AG04450 (cell line): ENCODE measurements at regions of chr11 and their contacts with region 1.

Region 1: GRCh38 chr11:26134481-26135355 is 197.2 kb upstream of the ANO3 start:
- DNase-seq: no peak
- H3K4me3 ChIP-seq: no peak overlapping the region
- H3K27ac ChIP-seq: no peak overlapping the region
- H3K27me3 ChIP-seq: no peaks in the 10 kb centered on the region
- CTCF ChIP-seq: peak; percentile 45

Region 2: GRCh38 chr11:25992294-25992693 is 142.4 kb before region 1 on chr11:
- CTCF ChIA-PET with region 1: interaction called, 10 read pairs
- POLR2A ChIA-PET with region 1: no interaction called
- DNase-seq: no peak
- H3K4me3 ChIP-seq: no peak overlapping the region
- H3K27ac ChIP-seq: no peak overlapping the region
- H3K27me3 ChIP-seq: no peaks in the 10 kb centered on the region
- CTCF ChIP-seq: no peak

Region 3: GRCh38 chr11:26112190-26112715 is 22.5 kb before region 1 on chr11:
- CTCF ChIA-PET with region 1: no interaction called
- POLR2A ChIA-PET with region 1: no interaction called
- DNase-seq: no peak
- H3K4me3 ChIP-seq: no peak overlapping the region
- H3K27ac ChIP-seq: no peak overlapping the region
- H3K27me3 ChIP-seq: no peaks in the 10 kb centered on the region
- CTCF ChIP-seq: no peak

Region 4: DNA sequence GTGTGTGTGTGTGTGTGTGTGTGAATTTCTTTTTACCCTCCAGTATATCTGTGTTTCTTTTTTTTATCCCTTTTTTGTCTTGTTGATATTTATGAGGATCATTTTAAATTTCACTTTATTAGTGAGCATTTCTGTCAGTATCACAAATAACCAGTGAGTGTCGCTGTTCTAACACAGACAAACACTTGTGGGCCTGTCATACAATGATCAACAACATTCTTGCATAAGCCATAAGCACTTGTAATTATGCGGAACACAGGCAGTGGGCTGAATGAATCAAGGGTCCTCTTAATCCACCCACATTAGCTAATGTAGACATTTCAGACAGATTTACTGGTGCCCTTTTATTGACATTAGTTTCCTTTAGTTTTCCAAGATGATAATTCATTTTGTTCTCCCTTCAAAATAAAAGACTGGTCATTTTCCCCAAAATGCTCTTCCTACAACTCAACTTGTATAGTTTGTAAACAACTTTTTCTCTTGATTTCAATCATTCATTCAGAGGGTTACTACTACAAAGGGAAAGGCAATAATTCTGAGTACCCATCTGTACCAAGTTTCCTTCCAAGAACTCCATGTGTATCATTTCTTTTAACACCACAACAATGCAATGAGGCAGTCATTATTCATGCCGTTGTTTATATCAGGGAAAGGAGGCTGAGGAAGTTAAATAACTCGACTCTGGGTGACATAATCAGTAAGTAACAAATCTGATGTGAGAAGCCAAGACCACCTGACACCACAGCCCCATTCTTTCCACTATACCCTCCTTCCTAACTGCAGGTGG is 162.7 kb after region 1 on chr11:
- CTCF ChIA-PET with region 1: no interaction called
- POLR2A ChIA-PET with region 1: no interaction called
- DNase-seq: peak; percentile 39
- H3K4me3 ChIP-seq: no peak overlapping the region
- H3K27ac ChIP-seq: no peak overlapping the region
- H3K27me3 ChIP-seq: no peaks in the 10 kb centered on the region
- CTCF ChIP-seq: peak; percentile 72